ENCODE measurements at regions of chr4 and their contacts with region 1.

Region 1: GRCh38 chr4:7802093-7802726 is 137.5 kb downstream of the AFAP1 start:
- DNase-seq: peak; percentile 86
- ATAC-seq: peak; percentile 91
- H3K4me3 Mint-ChIP-seq: no peak overlapping the region
- H3K27ac Mint-ChIP-seq: peak overlapping the region; percentile 31
- H3K4me1 Mint-ChIP-seq: peaks cover 10% of the 10 kb centered on the region
- H3K27me3 Mint-ChIP-seq: no peaks in the 10 kb centered on the region

Region 2: DNA sequence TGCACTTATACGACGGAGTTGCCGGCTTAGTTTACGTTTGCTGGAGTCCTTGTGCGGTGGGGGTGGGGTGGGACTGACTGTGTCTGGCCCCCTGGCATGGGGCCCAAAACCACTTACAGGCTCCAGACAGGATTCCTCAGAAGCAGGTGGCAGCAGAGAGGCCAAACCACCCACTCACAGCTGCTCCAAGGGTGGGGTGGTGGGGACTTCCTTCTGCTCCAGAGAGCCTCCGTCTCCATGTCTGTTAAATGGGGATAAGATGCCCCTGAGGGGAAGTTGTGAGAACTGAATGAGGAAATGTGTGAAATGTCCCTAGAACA is 404.1 kb before region 1 on chr4:
- CTCF ChIA-PET with region 1: no interaction called
- DNase-seq: peak; percentile 36
- ATAC-seq: no peak
- H3K4me3 Mint-ChIP-seq: no peak overlapping the region
- H3K27ac Mint-ChIP-seq: no peak overlapping the region
- H3K4me1 Mint-ChIP-seq: no peaks in the 10 kb centered on the region
- H3K27me3 Mint-ChIP-seq: peaks cover 18% of the 10 kb centered on the region

Region 3: DNA sequence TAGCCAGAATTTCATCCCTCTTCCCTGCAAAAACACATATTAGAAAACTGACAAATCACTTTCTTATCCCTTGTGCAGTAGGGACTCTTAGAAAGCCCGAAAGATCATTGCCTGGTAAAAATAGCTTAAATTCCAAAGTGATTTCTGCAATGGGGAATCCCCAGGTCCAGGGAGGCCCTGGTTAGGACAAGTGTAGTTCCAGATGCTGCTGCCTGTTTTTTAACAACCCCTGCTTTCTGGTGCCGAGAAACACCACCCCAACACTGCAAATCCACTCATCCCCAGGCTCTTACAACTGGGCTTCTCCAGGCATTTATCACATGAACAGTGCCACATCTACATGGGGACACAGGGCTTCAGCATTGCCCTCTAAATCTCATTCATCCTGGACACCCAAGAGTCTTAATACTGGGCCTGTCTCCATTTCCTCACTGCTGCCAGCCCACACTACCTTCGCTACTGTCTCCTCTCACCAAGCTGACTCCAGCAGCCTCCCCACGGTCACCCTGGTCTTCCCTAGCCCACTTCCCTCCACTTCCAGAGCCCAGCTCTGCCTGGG is 255.3 kb before region 1 on chr4:
- CTCF ChIA-PET with region 1: no interaction called
- DNase-seq: no peak
- ATAC-seq: no peak
- H3K4me3 Mint-ChIP-seq: no peak overlapping the region
- H3K27ac Mint-ChIP-seq: no peak overlapping the region
- H3K4me1 Mint-ChIP-seq: no peaks in the 10 kb centered on the region
- H3K27me3 Mint-ChIP-seq: no peaks in the 10 kb centered on the region

Region 4: GRCh38 chr4:7719354-7720174 is 82.6 kb before region 1 on chr4:
- CTCF ChIA-PET with region 1: interaction called, 11 read pairs
- DNase-seq: peak; percentile 68
- ATAC-seq: peak; percentile 71
- H3K4me3 Mint-ChIP-seq: no peak overlapping the region
- H3K27ac Mint-ChIP-seq: no peak overlapping the region
- H3K4me1 Mint-ChIP-seq: no peaks in the 10 kb centered on the region
- H3K27me3 Mint-ChIP-seq: peaks cover 21% of the 10 kb centered on the region

Region 5: DNA sequence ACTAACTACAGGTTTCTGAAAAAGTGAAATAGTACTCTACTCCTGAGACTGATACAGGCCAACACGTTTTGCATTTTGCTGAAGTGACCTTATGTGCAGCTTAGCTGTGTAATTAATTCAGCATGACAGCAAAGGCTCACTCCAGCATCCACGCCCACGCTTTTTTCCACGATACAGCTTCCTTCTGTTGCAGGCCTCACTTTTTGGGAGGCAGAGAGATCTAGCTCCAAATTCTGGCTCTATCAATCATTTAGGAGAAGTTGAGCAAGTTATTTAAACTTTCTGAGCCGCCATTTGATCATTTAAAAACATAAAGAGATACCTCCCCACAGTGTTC is 22.8 kb before region 1 on chr4:
- CTCF ChIA-PET with region 1: interaction called, 11 read pairs
- DNase-seq: no peak
- ATAC-seq: no peak
- H3K4me3 Mint-ChIP-seq: no peak overlapping the region
- H3K27ac Mint-ChIP-seq: no peak overlapping the region
- H3K4me1 Mint-ChIP-seq: peaks cover 12% of the 10 kb centered on the region
- H3K27me3 Mint-ChIP-seq: no peaks in the 10 kb centered on the region

Region 6: DNA sequence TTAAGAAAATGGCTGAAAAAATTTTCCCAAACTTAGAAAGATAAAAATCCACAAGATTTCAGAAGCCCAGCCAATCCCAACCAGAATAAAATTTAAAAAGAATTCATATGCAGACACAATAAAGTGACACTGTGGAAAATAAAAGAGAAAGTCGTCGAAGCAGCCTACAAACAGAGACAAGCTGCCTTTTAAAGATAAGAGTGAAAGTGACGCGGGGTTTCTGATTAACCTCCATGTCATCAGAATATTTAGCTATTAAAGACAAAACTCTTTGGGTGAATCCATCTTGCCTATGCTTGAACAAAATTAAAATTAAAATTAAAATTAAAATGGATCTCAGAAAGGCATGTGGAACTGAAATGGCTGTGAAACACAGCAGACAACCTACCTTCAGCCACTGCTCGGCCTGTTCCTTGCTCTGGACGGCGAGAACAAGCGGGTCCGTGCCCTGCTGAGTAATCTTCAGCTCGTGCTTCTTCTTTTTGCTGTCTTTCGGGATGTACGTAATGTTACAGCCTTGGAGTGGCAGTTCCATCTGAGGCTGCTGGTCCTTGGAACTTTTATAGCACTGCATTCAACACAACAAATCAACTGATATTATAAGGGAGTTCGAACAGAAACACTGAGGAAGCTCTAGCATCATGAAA is 36.0 kb after region 1 on chr4:
- CTCF ChIA-PET with region 1: interaction called, 128 read pairs
- DNase-seq: no peak
- ATAC-seq: no peak
- H3K4me3 Mint-ChIP-seq: no peak overlapping the region
- H3K27ac Mint-ChIP-seq: no peak overlapping the region
- H3K4me1 Mint-ChIP-seq: no peaks in the 10 kb centered on the region
- H3K27me3 Mint-ChIP-seq: no peaks in the 10 kb centered on the region

Region 7: DNA sequence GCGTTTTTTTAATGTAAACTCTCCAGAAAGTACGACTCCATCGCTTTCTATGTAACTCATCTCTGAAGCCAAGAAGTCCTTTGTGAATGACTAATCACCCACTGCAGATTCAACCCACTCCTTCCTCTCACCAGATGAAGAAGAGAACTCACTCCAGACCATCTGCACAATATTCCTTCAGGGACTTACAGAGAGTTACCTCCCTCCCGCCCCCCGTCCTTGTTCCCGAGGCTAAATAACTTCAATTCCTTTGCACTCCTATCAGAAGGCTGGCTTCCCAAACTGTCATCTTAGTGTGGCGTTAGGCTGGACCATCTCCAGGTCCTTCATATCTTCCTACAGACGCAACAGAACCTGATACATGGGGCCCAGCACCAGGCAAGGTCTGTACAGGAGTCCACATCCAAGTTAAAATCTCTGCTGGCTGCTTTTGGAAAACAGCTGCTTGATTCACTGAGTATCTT is 55.1 kb after region 1 on chr4:
- CTCF ChIA-PET with region 1: interaction called, 17 read pairs
- DNase-seq: no peak
- ATAC-seq: peak; percentile 38
- H3K4me3 Mint-ChIP-seq: no peak overlapping the region
- H3K27ac Mint-ChIP-seq: no peak overlapping the region
- H3K4me1 Mint-ChIP-seq: peaks cover 51% of the 10 kb centered on the region
- H3K27me3 Mint-ChIP-seq: peaks cover 11% of the 10 kb centered on the region

Region 8: DNA sequence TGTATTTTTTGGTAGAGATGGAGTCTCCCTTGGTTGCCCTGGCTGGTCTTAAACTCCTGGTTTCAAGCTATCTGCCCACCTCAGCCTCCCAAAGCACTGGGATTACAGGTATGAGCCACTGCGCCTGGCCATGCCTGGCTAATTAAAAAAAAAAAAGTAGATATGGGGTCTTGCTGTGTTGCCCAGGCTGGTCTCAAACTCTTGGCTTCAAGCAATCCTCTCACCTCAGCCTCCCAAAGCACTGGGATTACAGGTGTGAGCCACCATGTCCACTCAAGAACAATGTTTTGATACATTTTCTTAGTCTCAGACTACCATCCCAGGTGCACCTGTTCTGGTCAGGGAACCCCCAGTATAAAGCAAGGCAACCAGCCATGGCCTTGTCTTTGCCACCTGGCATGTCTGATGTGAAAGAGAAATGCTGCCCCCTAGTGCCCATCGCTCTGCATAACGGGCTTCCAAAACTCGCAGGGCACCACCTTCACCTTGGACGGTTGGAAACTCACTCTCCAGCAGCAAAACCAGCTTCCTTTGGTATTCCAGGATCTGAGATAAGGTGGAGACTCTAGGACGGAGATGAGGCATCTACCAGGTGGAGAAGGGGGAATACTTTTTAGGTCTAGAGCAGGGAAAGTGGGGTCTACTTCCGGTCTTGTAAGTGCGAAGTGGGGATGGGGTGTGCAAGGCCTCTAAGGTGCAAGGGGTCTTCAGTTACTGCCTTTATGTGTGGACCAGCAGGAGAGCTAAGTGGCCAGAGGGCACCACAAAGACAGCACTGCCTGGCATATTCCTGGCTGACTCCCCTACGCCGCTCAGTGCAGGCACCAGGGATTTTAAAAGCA is 185.2 kb after region 1 on chr4:
- CTCF ChIA-PET with region 1: interaction called, 170 read pairs
- DNase-seq: peak; percentile 81
- ATAC-seq: peak; percentile 86
- H3K4me3 Mint-ChIP-seq: no peak overlapping the region
- H3K27ac Mint-ChIP-seq: no peak overlapping the region
- H3K4me1 Mint-ChIP-seq: peaks cover 9% of the 10 kb centered on the region
- H3K27me3 Mint-ChIP-seq: no peaks in the 10 kb centered on the region

Measured in activated CD8-positive, alpha-beta memory T cell treated with anti-CD3 and anti-CD28 coated beads, Interleukin-2, amount 10 ng/mL, durations not matched to agents 7 days and 5 days (primary cell).